ENCODE measurements at regions of chr14 and their contacts with region 1.

Region 1: GRCh38 chr14:105086833-105087307 is 21.6 kb upstream of the GPR132 start:
- DNase-seq: peak; percentile 93
- ATAC-seq: peak; percentile 91
- H3K4me3 Mint-ChIP-seq: peak overlapping the region; percentile 68
- H3K27ac Mint-ChIP-seq: peak overlapping the region; percentile 65
- H3K4me1 Mint-ChIP-seq: peaks cover 27% of the 10 kb centered on the region
- H3K27me3 Mint-ChIP-seq: peaks cover 13% of the 10 kb centered on the region

Region 2: GRCh38 chr14:104976198-104977007 is 110.5 kb before region 1 on chr14:
- CTCF ChIA-PET with region 1: interaction called, 13 read pairs
- DNase-seq: peak; percentile 88
- ATAC-seq: peak; percentile 85
- H3K4me3 Mint-ChIP-seq: no peak overlapping the region
- H3K27ac Mint-ChIP-seq: no peak overlapping the region
- H3K4me1 Mint-ChIP-seq: peaks cover 10% of the 10 kb centered on the region
- H3K27me3 Mint-ChIP-seq: peaks cover 33% of the 10 kb centered on the region

Region 3: GRCh38 chr14:105012171-105012985 is 74.5 kb before region 1 on chr14:
- CTCF ChIA-PET with region 1: no interaction called
- DNase-seq: no peak
- ATAC-seq: no peak
- H3K4me3 Mint-ChIP-seq: no peak overlapping the region
- H3K27ac Mint-ChIP-seq: no peak overlapping the region
- H3K4me1 Mint-ChIP-seq: peaks cover 47% of the 10 kb centered on the region
- H3K27me3 Mint-ChIP-seq: no peaks in the 10 kb centered on the region

Region 4: DNA sequence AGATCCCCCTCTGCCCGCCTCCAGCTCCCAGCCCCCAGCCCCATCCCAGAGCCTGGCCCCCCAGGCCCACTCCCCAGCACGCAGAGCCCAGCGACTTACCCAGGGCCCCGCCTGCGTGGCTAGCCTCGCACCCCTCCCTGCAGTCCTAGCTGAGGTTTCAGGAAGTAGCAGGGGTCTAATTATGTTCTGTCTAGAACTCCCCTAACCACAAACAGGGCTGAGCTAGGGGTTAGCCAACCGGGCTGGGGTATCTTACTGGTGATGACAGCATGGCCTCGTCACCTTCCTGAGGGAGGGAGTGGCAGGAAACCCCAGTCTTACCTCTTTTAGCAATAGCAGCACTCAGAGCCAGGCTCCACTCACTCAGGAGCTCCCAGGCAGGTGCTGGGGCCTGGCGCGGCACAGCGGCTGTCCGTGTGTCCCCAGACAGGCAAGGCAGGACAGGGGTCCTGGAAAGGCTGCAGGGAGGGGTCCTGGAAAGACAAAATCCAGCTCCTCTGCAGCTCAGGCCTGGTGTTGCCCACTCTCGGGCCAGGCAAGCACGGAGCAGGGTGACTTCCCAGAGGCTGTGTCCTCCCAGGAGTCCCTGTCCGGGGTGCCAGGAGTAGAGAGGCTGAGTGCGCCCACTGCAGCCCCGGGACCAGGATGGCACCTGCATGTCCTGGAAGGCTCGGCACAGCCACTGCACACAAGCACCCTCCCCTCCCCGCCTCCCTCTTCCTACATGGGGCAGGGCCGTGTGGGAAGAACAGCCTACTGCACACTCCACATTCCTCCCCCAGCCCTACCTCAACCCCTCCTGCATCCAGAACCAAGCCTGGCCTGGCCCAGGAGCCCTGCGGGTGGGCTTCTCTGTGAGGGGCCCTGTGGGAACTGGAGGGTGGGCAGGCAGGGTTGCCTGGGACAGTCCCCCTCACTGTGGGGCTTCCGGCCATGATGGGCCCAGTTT is 21.3 kb before region 1 on chr14 and contains the start of gene GPR132:
- CTCF ChIA-PET with region 1: interaction called, 192 read pairs
- DNase-seq: peak; percentile 98
- ATAC-seq: peak; percentile 76
- H3K4me3 Mint-ChIP-seq: peak within 1 kb of the TSS; percentile 95
- H3K27ac Mint-ChIP-seq: peak within 1 kb of the TSS; percentile 97
- H3K4me1 Mint-ChIP-seq: peaks cover 65% of the 10 kb centered on the region
- H3K27me3 Mint-ChIP-seq: no peaks in the 10 kb centered on the region
- total RNA-seq, gene GPR132: 47.4 to 49.4 TPM

Region 5: GRCh38 chr14:105126981-105127329 is 40.1 kb after region 1 on chr14:
- CTCF ChIA-PET with region 1: no interaction called
- DNase-seq: no peak
- ATAC-seq: no peak
- H3K4me3 Mint-ChIP-seq: no peak overlapping the region
- H3K27ac Mint-ChIP-seq: no peak overlapping the region
- H3K4me1 Mint-ChIP-seq: peaks cover 3% of the 10 kb centered on the region
- H3K27me3 Mint-ChIP-seq: peaks cover 29% of the 10 kb centered on the region

Region 6: DNA sequence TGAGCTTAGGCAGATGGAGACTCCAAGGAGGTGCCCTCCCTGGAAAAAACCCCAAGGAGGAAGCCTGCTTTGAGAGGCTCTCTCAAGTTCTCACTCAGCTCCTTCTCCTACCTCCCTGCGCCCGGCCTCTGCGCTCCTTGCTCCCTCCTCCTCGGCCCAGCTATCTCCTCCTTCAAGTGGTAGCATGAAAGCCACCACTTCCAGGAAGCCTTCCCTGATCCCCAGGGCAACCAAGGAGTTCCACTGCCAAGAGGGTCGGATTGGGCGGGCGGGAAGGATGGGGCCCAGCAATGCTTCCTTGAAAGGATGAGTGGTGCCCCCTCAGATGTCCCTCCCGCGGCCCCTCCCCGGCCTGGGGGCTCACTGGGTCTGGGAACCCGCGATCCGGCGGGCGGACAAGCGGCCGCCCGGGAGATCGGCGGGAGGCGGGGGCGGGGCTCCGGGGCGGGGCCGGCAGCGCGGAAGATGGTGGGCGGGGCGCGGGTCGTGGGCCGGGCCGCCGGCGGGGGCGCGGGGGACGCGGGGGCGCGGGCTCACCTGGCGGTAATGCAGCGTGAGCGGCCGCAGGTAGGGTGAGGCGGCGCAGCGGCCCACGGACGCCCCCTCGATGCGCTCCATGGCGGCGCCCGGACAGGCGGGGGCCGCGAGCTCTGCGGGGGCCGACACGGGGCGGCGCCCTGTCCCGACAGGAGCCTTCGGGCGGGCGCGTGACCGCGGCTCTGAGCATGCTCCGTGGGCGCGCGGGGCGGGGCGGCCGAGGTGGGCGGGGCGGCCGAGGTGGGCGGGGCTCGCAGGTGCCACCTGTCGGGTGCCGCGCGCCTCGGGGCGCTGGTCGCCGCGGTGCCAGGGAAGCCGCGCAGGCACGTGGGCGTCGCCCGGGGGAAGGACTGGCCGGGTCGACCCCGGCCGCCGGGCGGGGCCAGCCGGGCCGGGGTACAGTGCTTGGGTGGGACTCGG is 94.0 kb after region 1 on chr14 and contains the start of gene NUDT14:
- CTCF ChIA-PET with region 1: interaction called, 10 read pairs
- DNase-seq: peak; percentile 86
- ATAC-seq: peak; percentile 90
- H3K4me3 Mint-ChIP-seq: peak within 1 kb of the TSS; percentile 66
- H3K27ac Mint-ChIP-seq: peak within 1 kb of the TSS; percentile 59
- H3K4me1 Mint-ChIP-seq: peaks cover 22% of the 10 kb centered on the region
- H3K27me3 Mint-ChIP-seq: peaks cover 12% of the 10 kb centered on the region
- total RNA-seq, gene NUDT14: 16.2 to 20.9 TPM

Region 7: DNA sequence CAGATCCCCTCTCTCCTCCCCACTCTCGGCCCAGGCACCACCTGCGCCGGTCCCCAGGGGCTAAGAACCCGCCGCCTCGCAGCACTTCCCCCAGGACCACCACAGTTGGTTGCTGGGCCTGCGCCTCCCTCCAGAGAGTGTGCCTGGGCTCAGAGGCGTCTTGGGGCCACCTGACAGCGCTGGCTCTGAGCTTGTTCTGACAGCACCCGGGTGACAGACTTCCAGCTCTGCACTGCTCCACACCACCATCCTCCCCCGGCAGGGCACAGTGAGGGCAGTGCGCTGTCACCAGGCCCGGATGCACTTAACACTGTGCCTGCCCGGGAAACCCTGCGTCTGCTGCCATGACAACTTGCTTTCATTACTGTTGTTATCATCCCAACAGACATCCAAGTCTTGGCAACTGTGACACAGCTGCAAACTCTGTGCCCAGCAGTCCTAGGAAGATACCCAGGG is 207.3 kb after region 1 on chr14:
- CTCF ChIA-PET with region 1: interaction called, 17 read pairs
- DNase-seq: peak; percentile 80
- ATAC-seq: peak; percentile 82
- H3K4me3 Mint-ChIP-seq: peak overlapping the region; percentile 29
- H3K27ac Mint-ChIP-seq: peak overlapping the region; percentile 83
- H3K4me1 Mint-ChIP-seq: peaks cover 49% of the 10 kb centered on the region
- H3K27me3 Mint-ChIP-seq: no peaks in the 10 kb centered on the region